Mammary epithelial cell (primary cell): ENCODE measurements at regions of chr1 and their contacts with region 1.

Region 1: GRCh38 chr1:37692078-37692833 is at the start of gene CDCA8:
- DNase-seq: peak; percentile 98
- H3K4me3 ChIP-seq: peak within 1 kb of the TSS; percentile 78 to 99 (median 80)
- H3K27ac ChIP-seq: peak within 1 kb of the TSS; percentile 89
- H3K4me1 ChIP-seq: peaks cover 22% of the 10 kb centered on the region
- H3K27me3 ChIP-seq: no peaks in the 10 kb centered on the region
- CTCF ChIP-seq: peak; percentile 37 to 74
- total RNA-seq, gene CDCA8: 1.0 to 30.0 TPM

Region 2: DNA sequence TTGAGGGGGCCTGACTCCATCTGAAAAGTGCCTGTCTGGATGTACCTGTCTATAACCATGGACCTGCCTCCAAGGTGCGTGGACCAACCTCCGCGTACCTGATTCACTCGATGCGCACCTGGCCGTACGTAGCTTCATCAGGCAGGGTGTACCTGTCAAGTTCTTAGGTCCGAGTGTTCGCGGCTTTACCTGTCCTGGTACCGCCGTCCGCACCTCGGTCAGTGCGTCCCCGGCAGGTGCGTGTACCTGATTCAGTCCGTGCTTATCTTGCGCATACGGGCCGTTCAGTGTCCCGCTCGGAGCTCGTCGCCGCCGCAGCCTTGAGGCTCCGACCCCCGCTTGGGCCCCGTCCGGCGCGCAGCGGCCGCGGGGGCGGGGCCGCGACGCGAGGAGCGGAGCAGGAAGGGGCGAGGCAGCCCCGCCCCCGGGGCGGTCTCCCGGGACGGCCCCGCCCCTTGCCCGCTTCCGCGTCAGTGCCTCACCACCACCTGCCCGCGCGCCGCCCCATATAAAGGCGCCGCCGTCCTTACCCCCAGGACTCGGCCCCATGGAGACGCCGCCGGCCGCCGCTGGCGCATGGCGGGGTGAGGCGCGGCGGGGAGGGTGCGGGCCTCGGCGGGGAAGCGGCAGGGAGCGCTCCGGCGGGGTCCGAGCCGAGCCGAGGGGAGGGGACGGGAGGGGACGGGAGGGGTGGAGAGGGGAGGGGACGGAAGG is 218.1 kb before region 1 on chr1 and contains the start of gene ZC3H12A:
- CTCF ChIA-PET with region 1: no interaction called
- dilution Hi-C with region 1: no loop called
- in situ Hi-C with region 1: loop called in 1 of 2 experiments (anchors 25 kb)
- intact Hi-C with region 1: loop called (anchors 5 kb)
- DNase-seq: peak; percentile 92
- H3K4me3 ChIP-seq: peak within 1 kb of the TSS; percentile 84 to 87 (median 85)
- H3K27ac ChIP-seq: peak within 1 kb of the TSS; percentile 96
- H3K4me1 ChIP-seq: peaks cover 62% of the 10 kb centered on the region
- H3K27me3 ChIP-seq: no peaks in the 10 kb centered on the region
- CTCF ChIP-seq: no peak
- total RNA-seq, gene ZC3H12A: 22.0 to 37.9 TPM

Region 3: DNA sequence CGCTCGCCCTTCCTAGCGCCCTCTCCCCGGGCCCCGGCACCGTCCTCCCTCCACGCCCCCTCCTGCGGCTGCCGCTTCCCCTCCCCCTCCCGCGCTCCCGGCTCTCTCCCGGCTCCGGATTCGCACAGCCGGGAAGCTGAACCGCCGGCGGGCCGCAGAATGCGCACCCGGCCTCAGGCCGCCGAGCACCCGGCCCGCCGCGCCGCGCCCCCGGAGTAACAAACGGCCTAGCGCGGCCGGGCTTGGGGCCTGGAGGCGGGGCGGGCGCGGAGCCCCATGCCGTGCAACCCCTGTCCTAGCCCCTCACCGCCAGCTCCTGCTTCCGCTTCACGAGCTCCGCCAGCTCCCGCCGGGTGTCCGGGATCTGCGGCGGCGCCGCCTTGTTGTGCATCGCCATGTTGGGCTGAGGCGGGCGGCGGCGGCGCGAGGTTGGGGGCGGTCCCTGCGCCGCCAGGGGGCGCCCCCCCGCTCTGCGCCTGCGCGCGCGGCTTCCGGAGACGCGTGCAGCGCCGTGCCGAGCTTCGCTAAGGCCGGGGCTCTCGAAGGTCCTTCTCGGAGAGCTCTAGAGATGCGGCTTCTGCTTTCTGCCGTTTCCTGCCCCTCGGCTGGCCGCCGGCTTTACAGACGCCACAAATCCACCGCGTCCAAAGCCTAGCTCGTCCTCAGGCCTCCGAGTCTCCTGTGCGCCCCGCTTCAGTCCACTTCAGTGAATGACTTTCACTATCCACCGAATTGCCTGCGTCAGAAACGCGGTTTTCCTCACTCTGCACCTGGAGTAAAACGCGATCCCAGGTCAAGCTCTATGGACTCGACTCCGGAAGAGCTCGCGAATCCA is 177.7 kb before region 1 on chr1 and contains the start of gene MEAF6:
- CTCF ChIA-PET with region 1: interaction called, 4 read pairs
- dilution Hi-C with region 1: no loop called
- in situ Hi-C with region 1: no loop called
- intact Hi-C with region 1: loop called (anchors 2 kb)
- DNase-seq: peak; percentile 77
- H3K4me3 ChIP-seq: peak within 1 kb of the TSS; percentile 86 to 98 (median 87)
- H3K27ac ChIP-seq: peak within 1 kb of the TSS; percentile 92
- H3K4me1 ChIP-seq: peaks cover 14% of the 10 kb centered on the region
- H3K27me3 ChIP-seq: no peaks in the 10 kb centered on the region
- CTCF ChIP-seq: peak; percentile 36 to 44
- total RNA-seq, gene MEAF6: 61.5 to 64.9 TPM

Region 4: GRCh38 chr1:37741130-37741529 is 48.9 kb after region 1 on chr1:
- CTCF ChIA-PET with region 1: no interaction called
- dilution Hi-C with region 1: no loop called
- in situ Hi-C with region 1: no loop called
- intact Hi-C with region 1: loop called (anchors 5 kb)
- DNase-seq: peak; percentile 94
- H3K4me3 ChIP-seq: no peak overlapping the region
- H3K27ac ChIP-seq: no peak overlapping the region
- H3K4me1 ChIP-seq: peaks cover 11% of the 10 kb centered on the region
- H3K27me3 ChIP-seq: no peaks in the 10 kb centered on the region
- CTCF ChIP-seq: no peak

Region 5: GRCh38 chr1:37807555-37808368 is 115.5 kb after region 1 on chr1 and contains the starts of genes C1orf122 and YRDC:
- CTCF ChIA-PET with region 1: no interaction called
- dilution Hi-C with region 1: no loop called
- in situ Hi-C with region 1: no loop called
- intact Hi-C with region 1: loop called (anchors 1 kb)
- DNase-seq: peak; percentile 90
- H3K4me3 ChIP-seq: peak within 1 kb of the TSS; percentile 69 to 77 (median 70)
- H3K27ac ChIP-seq: peak within 1 kb of the TSS; percentile 60
- H3K4me1 ChIP-seq: peaks cover 16% of the 10 kb centered on the region
- H3K27me3 ChIP-seq: no peaks in the 10 kb centered on the region
- CTCF ChIP-seq: no peak
- total RNA-seq, gene C1orf122: 13.0 to 73.6 TPM
- total RNA-seq, gene YRDC: 18.0 to 27.7 TPM